HAP-1 (cell line): ENCODE measurements at regions of chr1 and their contacts with region 1.

Region 1: DNA sequence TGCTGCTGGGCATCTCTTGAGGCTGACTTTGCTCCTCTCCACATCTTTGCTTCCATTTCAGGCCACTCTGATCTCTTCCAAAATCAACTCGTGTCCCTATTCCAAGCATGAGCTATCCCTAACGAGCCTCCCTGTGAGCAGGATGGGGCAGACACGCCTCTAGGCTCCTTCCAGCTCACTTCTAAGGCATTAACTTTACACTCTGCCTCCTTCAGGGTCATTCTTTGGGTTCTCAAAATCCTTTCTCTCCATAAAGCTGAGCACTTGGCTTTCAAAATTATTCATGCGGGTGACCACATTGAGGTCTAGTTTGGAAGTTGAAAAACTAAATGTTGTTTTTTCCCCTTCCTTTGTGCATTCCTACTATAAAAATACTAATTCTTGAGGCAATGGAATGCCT is 33.4 kb upstream of the BMP8B start:
- DNase-seq: no peak
- H3K4me3 ChIP-seq: no peak overlapping the region
- H3K4me1 ChIP-seq: no peaks in the 10 kb centered on the region
- H3K27me3 ChIP-seq: no peaks in the 10 kb centered on the region

Region 2: DNA sequence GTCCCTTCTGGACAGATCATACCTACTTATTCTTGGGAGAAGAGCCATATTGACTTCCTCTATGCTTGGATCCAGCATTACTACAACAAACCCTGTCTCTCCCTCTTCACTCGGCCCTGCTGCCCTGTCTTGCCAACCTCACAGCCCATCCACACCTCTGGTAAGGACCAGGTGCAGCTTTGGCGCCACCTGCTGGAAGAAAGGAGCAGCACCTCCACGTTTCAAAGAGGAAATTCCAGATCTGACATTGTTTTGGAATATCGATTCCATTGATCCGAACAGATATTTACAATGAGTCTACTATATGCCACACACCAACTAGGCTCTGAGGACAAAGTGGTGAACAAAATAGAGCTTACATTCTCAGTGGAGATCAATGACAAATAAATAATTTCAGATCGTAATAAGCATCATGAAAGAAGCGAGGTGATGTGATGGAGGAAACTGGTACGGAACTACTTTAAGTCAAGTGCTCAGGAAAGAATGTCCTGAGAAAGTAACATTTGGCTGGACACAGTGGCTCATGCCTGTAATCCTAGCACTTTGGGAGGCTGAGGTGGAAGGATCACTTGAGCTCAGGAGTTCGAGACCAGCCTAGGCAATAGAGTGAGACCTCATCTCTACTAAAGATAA is 151.5 kb after region 1 on chr1:
- in situ Hi-C with region 1: loop called (anchors 5 kb)
- DNase-seq: peak; percentile 64 to 88
- H3K4me3 ChIP-seq: no peak overlapping the region
- H3K4me1 ChIP-seq: peaks cover 3% of the 10 kb centered on the region; the same call in 1 of the 2 replicates
- H3K27me3 ChIP-seq: no peaks in the 10 kb centered on the region

Region 3: GRCh38 chr1:40373338-40374283 is 551.5 kb after region 1 on chr1 and contains the start of gene SMAP2:
- in situ Hi-C with region 1: no loop called
- DNase-seq: peak; percentile 93 to 98
- H3K4me3 ChIP-seq: peak within 1 kb of the TSS; percentile 86
- H3K4me1 ChIP-seq: peaks cover 4% of the 10 kb centered on the region
- H3K27me3 ChIP-seq: no peaks in the 10 kb centered on the region